Endothelial cell of umbilical vein (primary cell): ENCODE measurements at regions of chr2 and their contacts with region 1.

Region 1: GRCh38 chr2:214361123-214361522 is 49.7 kb upstream of the VWC2L start:
- DNase-seq: no peak
- H3K4me3 ChIP-seq: no peak overlapping the region
- H3K27ac ChIP-seq: no peak overlapping the region
- H3K4me1 ChIP-seq: no peaks in the 10 kb centered on the region
- H3K27me3 ChIP-seq: no peaks in the 10 kb centered on the region
- CTCF ChIP-seq: no peak
- POLR2A ChIP-seq: no peak

Region 2: DNA sequence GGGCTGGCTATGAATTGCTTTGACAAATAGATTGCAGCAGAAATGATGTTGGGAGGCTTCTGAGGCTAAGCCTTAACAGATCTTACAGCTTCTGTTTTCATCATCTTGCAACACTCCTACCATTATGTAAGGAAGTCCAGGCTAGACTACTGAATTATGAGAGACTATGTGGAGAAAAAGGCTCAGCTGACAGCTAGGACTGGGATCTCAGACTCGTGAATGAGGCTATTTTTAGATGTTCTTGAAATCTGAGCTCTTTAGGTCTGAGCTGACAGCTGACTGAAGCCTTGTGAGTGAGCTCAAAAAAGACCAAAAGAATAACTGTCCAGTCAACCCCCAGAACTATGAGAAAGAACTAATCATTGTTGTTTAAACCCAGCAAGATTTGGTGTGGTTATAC is 120.1 kb after region 1 on chr2:
- CTCF ChIA-PET with region 1: no interaction called
- POLR2A ChIA-PET with region 1: no interaction called
- dilution Hi-C with region 1: no loop called
- intact Hi-C with region 1: no loop called
- DNase-seq: no peak
- H3K4me3 ChIP-seq: no peak overlapping the region
- H3K27ac ChIP-seq: no peak overlapping the region
- H3K4me1 ChIP-seq: no peaks in the 10 kb centered on the region
- H3K27me3 ChIP-seq: no peaks in the 10 kb centered on the region
- CTCF ChIP-seq: no peak
- POLR2A ChIP-seq: no peak

Region 3: DNA sequence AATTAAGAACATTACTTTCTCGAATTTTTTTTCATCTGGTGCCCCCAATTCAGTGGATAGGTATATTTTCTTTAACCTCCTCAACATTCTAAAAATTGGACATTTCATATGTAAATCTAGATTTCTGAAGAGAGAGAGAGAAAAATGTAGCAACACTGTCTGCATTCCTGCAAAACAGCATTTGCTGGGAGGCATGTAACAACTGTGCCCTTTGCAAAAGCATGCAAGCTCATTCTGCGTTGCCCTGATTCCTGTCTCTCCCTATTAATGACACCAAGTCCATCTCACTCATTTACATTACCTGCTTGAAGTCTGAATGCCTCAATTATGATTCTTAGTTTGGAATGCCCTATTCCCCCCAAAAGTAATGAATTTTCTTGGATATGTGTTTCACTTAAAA is 528.2 kb after region 1 on chr2:
- CTCF ChIA-PET with region 1: no interaction called
- POLR2A ChIA-PET with region 1: no interaction called
- dilution Hi-C with region 1: no loop called
- intact Hi-C with region 1: loop called (anchors 5 kb)
- DNase-seq: no peak
- H3K4me3 ChIP-seq: no peak overlapping the region
- H3K27ac ChIP-seq: no peak overlapping the region
- H3K4me1 ChIP-seq: no peaks in the 10 kb centered on the region
- H3K27me3 ChIP-seq: no peaks in the 10 kb centered on the region
- CTCF ChIP-seq: no peak
- POLR2A ChIP-seq: no peak